Activated T-helper 2 cell treated with anti-CD3 and anti-CD28 coated beads, Interferon-gamma antibody, Interleukin-2, Interleukin-4, amounts not matched to agents 10 μg/mL and 5 μg/mL and 100 μg/mL, durations not matched to agents 14 hours and 24 hours and 36 hours (primary cell): ENCODE measurements at regions of chr5 and their contacts with region 1.

Region 1: GRCh38 chr5:50440651-50441492 is at the start of gene EMB:
- DNase-seq: peak; percentile 76
- H3K4me3 Mint-ChIP-seq: peak within 1 kb of the TSS; percentile 88
- H3K27ac Mint-ChIP-seq: peak within 1 kb of the TSS; percentile 96
- H3K4me1 Mint-ChIP-seq: peaks cover 56% of the 10 kb centered on the region
- H3K27me3 Mint-ChIP-seq: no peaks in the 10 kb centered on the region
- total RNA-seq, gene EMB: 77.6 and 78.6 TPM in 2 replicates

Region 2: GRCh38 chr5:50325237-50325832 is 115.5 kb before region 1 on chr5:
- intact Hi-C with region 1: loop called (anchors 5 kb)
- DNase-seq: no peak
- H3K4me3 Mint-ChIP-seq: no peak overlapping the region
- H3K27ac Mint-ChIP-seq: no peak overlapping the region
- H3K4me1 Mint-ChIP-seq: peaks cover 12% of the 10 kb centered on the region
- H3K27me3 Mint-ChIP-seq: peaks cover 17% of the 10 kb centered on the region

Region 3: GRCh38 chr5:50501491-50502228 is 60.8 kb after region 1 on chr5:
- intact Hi-C with region 1: loop called (anchors 2 kb)
- DNase-seq: no peak
- H3K4me3 Mint-ChIP-seq: no peak overlapping the region
- H3K27ac Mint-ChIP-seq: no peak overlapping the region
- H3K4me1 Mint-ChIP-seq: peaks cover 28% of the 10 kb centered on the region
- H3K27me3 Mint-ChIP-seq: peaks cover 15% of the 10 kb centered on the region

Region 4: GRCh38 chr5:50564079-50564478 is 123.2 kb after region 1 on chr5:
- intact Hi-C with region 1: loop called (anchors 5 kb)
- DNase-seq: peak; percentile 38
- H3K4me3 Mint-ChIP-seq: peak overlapping the region; percentile 45
- H3K27ac Mint-ChIP-seq: peak overlapping the region; percentile 46
- H3K4me1 Mint-ChIP-seq: peaks cover 36% of the 10 kb centered on the region
- H3K27me3 Mint-ChIP-seq: no peaks in the 10 kb centered on the region

Region 5: DNA sequence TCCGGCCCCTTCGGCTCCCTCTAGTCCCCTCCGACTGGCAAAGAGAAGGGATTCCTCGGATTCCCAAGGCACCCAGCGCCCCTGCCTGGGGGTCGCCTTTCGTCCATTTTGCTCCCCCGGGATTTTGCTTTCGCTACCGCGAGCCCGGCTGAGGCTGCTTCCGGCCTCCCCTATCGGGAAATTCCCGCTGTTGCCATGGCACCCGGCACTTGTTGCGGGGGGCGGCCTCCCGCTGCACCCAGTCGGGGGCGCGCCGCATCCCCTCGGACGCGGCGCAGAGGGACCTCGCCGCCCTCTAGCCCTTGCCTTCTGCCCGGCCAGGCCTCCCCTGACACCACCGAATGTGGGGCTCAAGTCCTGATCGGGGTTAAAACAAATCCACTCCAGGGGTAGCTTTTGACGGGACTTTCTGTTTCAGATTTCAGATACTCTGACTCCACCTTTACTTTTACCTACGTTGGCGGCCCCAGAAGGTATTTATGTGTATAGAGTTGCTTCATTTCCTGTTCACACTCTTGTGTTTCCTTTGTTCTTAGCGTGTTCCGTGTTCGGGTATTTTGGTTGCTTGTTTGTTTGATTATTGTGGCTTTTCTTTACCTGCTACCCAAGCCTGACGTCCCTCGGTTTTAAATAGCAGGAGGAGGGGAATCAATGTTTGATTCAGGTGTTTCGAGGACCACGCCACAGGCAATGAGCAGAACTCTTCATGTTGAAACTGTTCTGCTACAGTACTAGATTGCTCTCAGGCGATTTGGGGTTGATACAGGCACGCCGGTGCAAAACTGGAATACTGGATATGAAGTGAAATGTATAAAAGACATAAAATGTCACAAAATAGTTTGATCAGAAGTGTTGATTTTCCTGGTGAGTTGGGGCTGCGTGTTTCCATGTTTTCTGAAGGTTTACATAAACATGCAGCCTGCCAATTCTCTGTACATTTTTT is 227.1 kb after region 1 on chr5:
- intact Hi-C with region 1: loop called (anchors 2 kb)
- DNase-seq: peak; percentile 74
- H3K4me3 Mint-ChIP-seq: peak overlapping the region; percentile 98
- H3K27ac Mint-ChIP-seq: peak overlapping the region; percentile 100
- H3K4me1 Mint-ChIP-seq: peaks cover 47% of the 10 kb centered on the region
- H3K27me3 Mint-ChIP-seq: no peaks in the 10 kb centered on the region

Region 6: GRCh38 chr5:50751064-50751657 is 310.3 kb after region 1 on chr5:
- intact Hi-C with region 1: loop called (anchors 2 kb)
- DNase-seq: no peak
- H3K4me3 Mint-ChIP-seq: no peak overlapping the region
- H3K27ac Mint-ChIP-seq: no peak overlapping the region
- H3K4me1 Mint-ChIP-seq: peaks cover 39% of the 10 kb centered on the region
- H3K27me3 Mint-ChIP-seq: no peaks in the 10 kb centered on the region